ENCODE measurements at regions of chr7 and their contacts with region 1.

Region 1: DNA sequence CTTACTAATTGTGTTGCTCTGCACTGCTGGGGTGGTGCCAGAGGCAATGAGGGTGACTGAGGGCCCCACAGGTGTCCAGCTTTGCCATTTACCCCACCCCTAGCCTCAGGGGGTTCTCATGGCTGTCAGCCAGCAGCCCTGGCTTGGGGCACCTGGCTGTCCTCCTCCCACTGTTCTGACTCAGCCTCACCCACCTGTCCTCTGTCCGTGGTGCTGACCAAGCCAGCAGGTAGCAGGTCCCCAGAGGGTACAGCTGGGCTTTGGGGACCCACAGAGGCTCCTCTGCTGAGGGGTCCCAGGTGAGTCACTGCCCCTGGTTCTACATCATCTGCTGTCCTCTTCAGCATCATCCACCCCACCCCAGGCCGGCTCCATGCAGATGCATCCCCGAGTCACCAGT is 32.2 kb upstream of the ZNF716 start:
- DNase-seq: no peak
- H3K4me3 ChIP-seq: no peak overlapping the region
- H3K4me3 Mint-ChIP-seq: no peak overlapping the region
- H3K27ac ChIP-seq: no peak overlapping the region
- H3K27ac Mint-ChIP-seq: no peak overlapping the region
- H3K4me1 ChIP-seq: no peaks in the 10 kb centered on the region
- H3K4me1 Mint-ChIP-seq: no peaks in the 10 kb centered on the region
- H3K27me3 ChIP-seq: no peaks in the 10 kb centered on the region
- H3K27me3 Mint-ChIP-seq: no peaks in the 10 kb centered on the region
- CTCF ChIP-seq: no peak

Region 2: DNA sequence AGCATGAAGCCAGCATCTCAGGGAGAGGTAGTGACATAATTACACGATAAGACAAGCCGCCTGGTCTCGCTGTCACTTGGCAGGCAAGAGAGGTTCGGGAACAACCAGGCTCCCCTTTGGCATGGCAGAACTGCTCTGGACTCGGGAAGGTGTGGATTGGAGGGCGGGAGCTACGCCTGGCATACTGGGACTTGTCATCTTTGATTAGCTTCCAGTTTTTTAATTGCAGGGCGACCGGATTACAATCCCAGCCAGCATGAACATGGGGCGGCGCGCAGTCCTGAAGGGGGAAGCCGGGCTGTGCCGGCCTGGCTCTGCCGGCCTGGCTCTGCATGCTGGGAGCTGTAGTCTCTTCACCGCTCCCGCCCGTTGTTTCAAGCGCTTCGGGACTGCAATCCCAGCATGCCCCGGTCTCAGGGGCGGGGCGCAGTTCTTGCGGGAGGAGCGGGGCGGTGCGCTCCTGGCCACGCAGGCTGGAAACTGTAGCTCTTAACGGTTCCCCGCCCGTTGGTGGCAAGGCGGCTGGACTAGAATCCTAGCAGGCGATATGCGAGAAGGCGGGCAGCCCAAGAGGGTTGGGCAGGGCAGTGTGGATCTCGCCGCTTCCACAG is 13.3 kb before region 1 on chr7:
- intact Hi-C with region 1: loop called in 1 of 2 experiments (anchors 1 kb)
- DNase-seq: no peak
- H3K4me3 ChIP-seq: no peak overlapping the region
- H3K4me3 Mint-ChIP-seq: peak overlapping the region in 1 of 2 donors; percentile 37
- H3K27ac ChIP-seq: no peak overlapping the region
- H3K27ac Mint-ChIP-seq: no peak overlapping the region
- H3K4me1 ChIP-seq: no peaks in the 10 kb centered on the region
- H3K4me1 Mint-ChIP-seq: no peaks in the 10 kb centered on the region
- H3K27me3 ChIP-seq: no peaks in the 10 kb centered on the region
- H3K27me3 Mint-ChIP-seq: peaks cover 0 to 2% (median 2%) of the 10 kb centered on the region in 3 donors
- CTCF ChIP-seq: no peak

Measured in CD14-positive monocyte (primary cell).